ENCODE measurements at regions of chr7 and their contacts with region 1.

Region 1: GRCh38 chr7:98168181-98168905 is 42.9 kb upstream of the BHLHA15 start:
- DNase-seq: peak; percentile 80 to 83 (median 82)
- ATAC-seq: peak; percentile 81
- H3K4me3 ChIP-seq: no peak overlapping the region
- H3K27ac ChIP-seq: no peak overlapping the region
- H3K4me1 ChIP-seq: peaks cover 0 to 12% of the 10 kb centered on the region in 2 experiments; a peak in 1 of 5 replicates
- H3K27me3 ChIP-seq: no peaks in the 10 kb centered on the region
- CTCF ChIP-seq: peak; percentile 83 to 96 (median 88)
- EP300 ChIP-seq: 0 out of 2 replicates have a peak, but pooled peaks have one; percentile 21
- POLR2A ChIP-seq: no peak
- RAD21 ChIP-seq: peak; percentile 87 to 93

Region 2: DNA sequence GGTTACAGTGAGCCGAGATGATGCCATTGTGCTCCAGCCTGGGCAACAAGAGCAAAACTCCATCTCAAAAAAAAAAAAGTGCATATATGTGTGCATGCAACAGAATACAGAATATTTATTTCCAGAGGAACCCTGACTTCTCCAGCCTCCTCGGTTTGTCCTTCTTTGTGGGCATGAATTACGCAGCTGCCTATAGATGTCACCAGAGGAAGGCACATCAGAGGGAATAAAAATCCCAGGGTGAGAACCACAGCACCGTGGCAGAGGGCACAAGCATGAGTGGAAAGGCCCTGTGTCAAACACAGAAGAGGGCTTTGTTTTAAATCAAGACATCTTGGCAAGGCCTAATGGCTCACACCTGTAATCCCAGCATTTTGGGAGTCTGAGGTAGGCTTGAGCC is 154.0 kb before region 1 on chr7:
- CTCF ChIA-PET with region 1: interaction called, 10 read pairs
- POLR2A ChIA-PET with region 1: no interaction called
- in situ Hi-C with region 1: no loop called
- intact Hi-C with region 1: no loop called
- DNase-seq: no peak
- ATAC-seq: no peak
- H3K4me3 ChIP-seq: no peak overlapping the region
- H3K27ac ChIP-seq: no peak overlapping the region
- H3K4me1 ChIP-seq: peaks cover 0 to 2% of the 10 kb centered on the region in 2 experiments; a peak in 2 of 5 replicates
- H3K27me3 ChIP-seq: peaks cover 3 to 27% of the 10 kb centered on the region in 2 experiments; a peak in 2 of 5 replicates
- CTCF ChIP-seq: no peak
- EP300 ChIP-seq: no peak
- POLR2A ChIP-seq: no peak
- RAD21 ChIP-seq: no peak

Region 3: GRCh38 chr7:98106647-98107445 is 61.5 kb before region 1 on chr7 and contains the start of gene LMTK2:
- CTCF ChIA-PET with region 1: interaction called, 10 read pairs
- POLR2A ChIA-PET with region 1: no interaction called
- in situ Hi-C with region 1: no loop called
- intact Hi-C with region 1: loop called (anchors 1 kb)
- DNase-seq: peak; percentile 97 to 100 (median 100)
- ATAC-seq: peak; percentile 99
- H3K4me3 ChIP-seq: peak within 1 kb of the TSS; percentile 88
- H3K27ac ChIP-seq: peak within 1 kb of the TSS; percentile 75
- H3K4me1 ChIP-seq: peaks cover 11 to 17% of the 10 kb centered on the region in 2 experiments
- H3K27me3 ChIP-seq: peaks cover 0 to 3% of the 10 kb centered on the region in 2 experiments; a peak in 1 of 5 replicates
- CTCF ChIP-seq: peak; percentile 89 to 99 (median 97)
- EP300 ChIP-seq: no peak
- POLR2A ChIP-seq: peak; percentile 96
- RAD21 ChIP-seq: peak; percentile 76 to 79
- polyA plus RNA-seq, gene LMTK2: 0.78 to 1.8 TPM

Region 4: GRCh38 chr7:98240961-98241674 is 72.8 kb after region 1 on chr7:
- CTCF ChIA-PET with region 1: no interaction called
- POLR2A ChIA-PET with region 1: no interaction called
- in situ Hi-C with region 1: no loop called
- intact Hi-C with region 1: loop called (anchors 5 kb)
- DNase-seq: peak; percentile 57 to 74 (median 67)
- ATAC-seq: peak; percentile 94
- H3K4me3 ChIP-seq: no peak overlapping the region
- H3K27ac ChIP-seq: no peak overlapping the region
- H3K4me1 ChIP-seq: peaks cover 0 to 18% of the 10 kb centered on the region in 2 experiments; a peak in 2 of 5 replicates
- H3K27me3 ChIP-seq: peaks cover 0 to 7% of the 10 kb centered on the region in 2 experiments; a peak in 1 of 5 replicates
- CTCF ChIP-seq: peak; percentile 71 to 83 (median 75)
- EP300 ChIP-seq: no peak
- POLR2A ChIP-seq: no peak
- RAD21 ChIP-seq: peak; percentile 16 to 55; a peak in 2 of 4 replicates

Region 5: GRCh38 chr7:99090771-99091542 is 922.6 kb after region 1 on chr7:
- CTCF ChIA-PET with region 1: no interaction called
- POLR2A ChIA-PET with region 1: no interaction called
- in situ Hi-C with region 1: no loop called
- intact Hi-C with region 1: no loop called
- DNase-seq: peak in 2 of 4 experiments; percentile 29 to 30
- ATAC-seq: peak; percentile 47
- H3K4me3 ChIP-seq: no peak overlapping the region
- H3K27ac ChIP-seq: no peak overlapping the region; the same call in 2 of the 3 replicates
- H3K4me1 ChIP-seq: peaks cover 12 to 27% of the 10 kb centered on the region in 2 experiments; a peak in 4 of 5 replicates
- H3K27me3 ChIP-seq: no peaks in the 10 kb centered on the region
- CTCF ChIP-seq: no peak
- EP300 ChIP-seq: no peak
- POLR2A ChIP-seq: no peak
- RAD21 ChIP-seq: no peak